Activated B cell treated with CpG ODN at 0.5 μM for 24 hours (primary cell): ENCODE measurements at regions of chr18 and their contacts with region 1.

Region 1: GRCh38 chr18:12990967-12991838 is at the start of gene CEP192:
- DNase-seq: peak; percentile 93
- ATAC-seq: peak; percentile 96
- H3K4me3 Mint-ChIP-seq: peak within 1 kb of the TSS; percentile 93
- H3K27ac Mint-ChIP-seq: peak within 1 kb of the TSS; percentile 94
- H3K4me1 Mint-ChIP-seq: peaks cover 32% of the 10 kb centered on the region
- H3K27me3 Mint-ChIP-seq: no peaks in the 10 kb centered on the region
- CTCF ChIP-seq: no peak
- total RNA-seq, gene CEP192: 33.6 and 34.2 TPM in 2 replicates

Region 2: DNA sequence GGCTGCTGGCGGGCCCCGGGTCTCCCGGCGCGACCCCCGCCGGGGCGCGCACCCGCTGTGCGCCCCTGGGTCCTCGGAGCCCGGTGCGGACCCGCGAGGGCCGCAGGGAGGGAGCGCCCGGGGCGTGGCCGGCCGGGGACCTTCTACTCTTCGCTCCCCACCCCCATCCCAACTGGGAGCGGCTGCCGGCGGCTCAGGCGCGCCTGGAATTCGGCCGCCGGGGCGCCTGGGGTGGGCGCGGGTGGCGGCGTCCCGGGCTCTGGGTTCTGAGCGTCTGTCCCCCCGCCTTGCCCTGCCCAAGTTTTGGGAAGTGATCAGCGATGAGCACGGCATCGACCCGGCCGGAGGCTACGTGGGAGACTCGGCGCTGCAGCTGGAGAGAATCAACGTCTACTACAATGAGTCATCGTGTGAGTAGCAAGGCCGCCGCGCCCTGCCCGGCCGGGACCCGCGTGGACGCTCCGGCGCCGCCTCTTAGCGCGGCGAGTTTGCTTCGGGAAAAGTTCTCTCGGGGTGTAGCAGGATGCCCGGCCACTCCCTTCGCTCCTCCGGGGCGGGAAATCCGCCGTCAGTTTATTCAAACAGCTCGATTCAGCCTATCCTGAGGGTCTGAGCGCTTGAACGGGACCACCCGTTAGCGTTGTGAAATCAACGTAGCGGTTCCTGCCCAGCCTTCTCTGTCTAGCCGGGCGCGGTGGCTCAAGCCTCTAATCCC is 682.7 kb before region 1 on chr18:
- CTCF ChIA-PET with region 1: no interaction called
- POLR2A ChIA-PET with region 1: no interaction called
- intact Hi-C with region 1: loop called (anchors 2 kb)
- DNase-seq: peak; percentile 57
- ATAC-seq: peak; percentile 63
- H3K4me3 Mint-ChIP-seq: peak overlapping the region; percentile 85
- H3K27ac Mint-ChIP-seq: peak overlapping the region; percentile 69
- H3K4me1 Mint-ChIP-seq: peaks cover 32% of the 10 kb centered on the region
- H3K27me3 Mint-ChIP-seq: peaks cover 20% of the 10 kb centered on the region
- CTCF ChIP-seq: no peak

Region 3: DNA sequence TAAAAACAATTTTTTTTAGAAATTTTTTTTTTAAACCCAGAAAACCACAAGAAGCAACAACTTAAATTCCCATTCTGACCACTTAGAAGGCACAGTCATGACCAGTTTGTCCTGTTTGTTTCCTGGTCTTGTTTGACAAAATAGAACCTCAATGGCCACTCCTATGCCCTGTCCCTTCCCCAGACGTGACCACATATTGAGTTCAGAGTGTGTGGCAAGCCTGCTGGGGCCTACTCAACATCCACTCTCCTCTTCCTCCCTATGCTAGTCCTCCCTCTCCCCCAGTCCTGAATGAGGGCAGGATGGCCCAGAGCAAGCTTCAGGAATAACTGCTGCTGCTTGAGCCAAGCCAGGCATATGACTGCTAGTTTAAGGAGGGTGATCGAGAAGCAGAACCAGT is 493.9 kb before region 1 on chr18:
- CTCF ChIA-PET with region 1: no interaction called
- POLR2A ChIA-PET with region 1: no interaction called
- intact Hi-C with region 1: no loop called
- DNase-seq: no peak
- ATAC-seq: no peak
- H3K4me3 Mint-ChIP-seq: no peak overlapping the region
- H3K27ac Mint-ChIP-seq: no peak overlapping the region
- H3K4me1 Mint-ChIP-seq: no peaks in the 10 kb centered on the region
- H3K27me3 Mint-ChIP-seq: no peaks in the 10 kb centered on the region
- CTCF ChIP-seq: no peak

Region 4: DNA sequence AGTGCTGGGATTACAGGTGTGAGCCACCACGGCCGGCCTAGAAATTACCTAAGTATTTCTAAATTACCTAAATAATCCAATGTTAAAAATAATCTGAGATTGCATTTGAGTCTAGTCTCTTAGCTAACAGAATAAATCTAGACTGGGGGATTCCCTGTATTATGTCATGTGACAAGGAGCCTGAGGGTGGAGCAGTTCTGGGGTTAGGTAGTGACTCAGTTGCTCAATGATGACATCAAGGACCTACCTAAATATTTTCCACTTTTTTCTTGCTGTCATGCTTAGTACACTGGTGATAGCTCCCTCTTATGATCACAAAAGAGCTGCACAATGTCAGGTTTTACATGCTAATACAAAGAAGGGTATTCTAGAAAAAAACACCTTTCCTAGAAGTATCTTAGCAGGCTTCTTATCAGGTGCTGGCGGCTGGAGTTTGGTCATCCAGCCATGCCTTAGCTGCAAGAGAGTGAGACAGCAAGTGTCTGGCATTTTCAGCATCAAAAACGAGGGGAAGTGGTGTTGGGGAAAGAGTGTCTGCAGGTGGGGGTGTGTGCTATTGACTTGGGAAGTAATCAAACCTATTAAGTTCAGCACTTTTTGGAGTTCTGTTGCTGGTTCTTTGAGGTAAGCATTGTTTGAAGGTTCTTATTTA is 17.5 kb before region 1 on chr18:
- CTCF ChIA-PET with region 1: interaction called, 3 read pairs
- POLR2A ChIA-PET with region 1: interaction called, 17 read pairs
- intact Hi-C with region 1: no loop called
- DNase-seq: no peak
- ATAC-seq: no peak
- H3K4me3 Mint-ChIP-seq: no peak overlapping the region
- H3K27ac Mint-ChIP-seq: no peak overlapping the region
- H3K4me1 Mint-ChIP-seq: no peaks in the 10 kb centered on the region
- H3K27me3 Mint-ChIP-seq: no peaks in the 10 kb centered on the region
- CTCF ChIP-seq: no peak

Region 5: GRCh38 chr18:13051950-13052349 is 60.7 kb after region 1 on chr18:
- CTCF ChIA-PET with region 1: no interaction called
- POLR2A ChIA-PET with region 1: interaction called, 6 read pairs
- intact Hi-C with region 1: loop called (anchors 2 kb)
- DNase-seq: peak; percentile 19
- ATAC-seq: peak; percentile 96
- H3K4me3 Mint-ChIP-seq: peak overlapping the region; percentile 56
- H3K27ac Mint-ChIP-seq: peak overlapping the region; percentile 91
- H3K4me1 Mint-ChIP-seq: peaks cover 21% of the 10 kb centered on the region
- H3K27me3 Mint-ChIP-seq: no peaks in the 10 kb centered on the region
- CTCF ChIP-seq: no peak

Region 6: DNA sequence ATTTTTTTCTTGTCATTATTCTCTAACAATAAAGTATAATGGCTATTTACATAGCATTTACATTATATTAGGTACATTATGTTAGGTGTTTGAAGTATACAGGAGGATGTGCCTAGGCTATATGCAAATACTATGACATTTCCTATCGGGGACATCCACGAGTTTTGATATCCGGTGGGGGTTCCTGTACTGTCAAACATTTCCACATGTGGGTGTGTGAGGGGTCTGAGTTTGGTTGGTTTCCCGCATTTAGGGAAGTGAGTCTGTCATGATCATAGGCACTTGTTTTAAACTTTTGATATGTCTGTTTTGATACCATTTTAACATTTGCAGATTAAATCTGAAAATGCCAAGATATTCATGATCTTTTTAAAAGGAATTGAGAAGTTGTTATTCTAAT is 75.9 kb after region 1 on chr18:
- CTCF ChIA-PET with region 1: no interaction called
- POLR2A ChIA-PET with region 1: no interaction called
- intact Hi-C with region 1: loop called (anchors 5 kb)
- DNase-seq: no peak
- ATAC-seq: peak; percentile 72
- H3K4me3 Mint-ChIP-seq: no peak overlapping the region
- H3K27ac Mint-ChIP-seq: peak overlapping the region; percentile 69
- H3K4me1 Mint-ChIP-seq: peaks cover 28% of the 10 kb centered on the region
- H3K27me3 Mint-ChIP-seq: no peaks in the 10 kb centered on the region
- CTCF ChIP-seq: no peak

Region 7: GRCh38 chr18:13137670-13138419 is 146.6 kb after region 1 on chr18:
- CTCF ChIA-PET with region 1: no interaction called
- POLR2A ChIA-PET with region 1: interaction called, 14 read pairs
- intact Hi-C with region 1: loop called (anchors 1 kb)
- DNase-seq: peak; percentile 43
- ATAC-seq: peak; percentile 87
- H3K4me3 Mint-ChIP-seq: peak overlapping the region; percentile 98
- H3K27ac Mint-ChIP-seq: peak overlapping the region; percentile 97
- H3K4me1 Mint-ChIP-seq: peaks cover 23% of the 10 kb centered on the region
- H3K27me3 Mint-ChIP-seq: no peaks in the 10 kb centered on the region
- CTCF ChIP-seq: no peak